ENCODE measurements at regions of chr18 and their contacts with region 1.

Region 1: DNA sequence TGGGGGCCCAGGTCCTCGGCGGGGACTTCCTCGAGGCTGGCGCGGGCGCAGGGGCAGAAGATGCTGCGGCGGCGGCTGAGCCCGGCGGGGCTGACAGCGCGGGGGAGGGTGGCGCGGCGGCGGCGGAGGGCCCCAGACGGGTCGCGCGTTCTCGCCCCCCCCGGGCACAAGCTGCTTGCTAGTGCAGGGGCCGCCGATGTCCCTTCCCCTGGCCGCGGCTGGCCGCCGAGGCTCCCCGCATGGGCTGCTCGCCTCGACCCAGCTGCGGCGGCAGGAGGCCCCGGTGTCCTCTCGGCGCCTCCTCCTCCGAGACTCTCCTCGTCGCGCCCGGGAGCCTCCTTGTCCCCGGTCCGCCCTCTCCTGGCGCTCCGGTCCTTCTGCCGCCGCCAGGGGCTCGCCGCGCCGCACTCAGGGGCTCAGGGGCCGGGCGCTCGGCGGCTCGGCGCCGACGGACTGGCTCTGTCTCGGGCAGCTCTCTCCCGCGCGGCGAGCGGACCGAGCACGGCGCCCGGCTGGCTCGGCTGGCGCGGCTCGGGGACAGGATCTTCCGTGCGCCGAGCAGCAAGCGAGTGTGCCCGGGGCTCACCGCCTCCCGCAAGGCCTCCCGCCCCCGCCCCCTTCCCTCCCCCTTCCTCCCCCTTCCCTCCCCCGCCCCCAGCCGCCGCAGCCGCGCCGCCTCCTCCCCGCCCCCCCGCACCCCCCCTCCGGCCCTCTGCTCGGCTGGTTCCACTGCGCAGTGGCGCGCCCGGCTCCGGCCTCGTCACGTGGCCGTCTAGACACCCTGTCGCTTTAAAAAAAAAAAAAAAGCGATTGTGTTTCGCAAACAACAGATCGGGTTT is 902 bp upstream of the SMAD7 start:
- DNase-seq: peak; percentile 92

Region 2: DNA sequence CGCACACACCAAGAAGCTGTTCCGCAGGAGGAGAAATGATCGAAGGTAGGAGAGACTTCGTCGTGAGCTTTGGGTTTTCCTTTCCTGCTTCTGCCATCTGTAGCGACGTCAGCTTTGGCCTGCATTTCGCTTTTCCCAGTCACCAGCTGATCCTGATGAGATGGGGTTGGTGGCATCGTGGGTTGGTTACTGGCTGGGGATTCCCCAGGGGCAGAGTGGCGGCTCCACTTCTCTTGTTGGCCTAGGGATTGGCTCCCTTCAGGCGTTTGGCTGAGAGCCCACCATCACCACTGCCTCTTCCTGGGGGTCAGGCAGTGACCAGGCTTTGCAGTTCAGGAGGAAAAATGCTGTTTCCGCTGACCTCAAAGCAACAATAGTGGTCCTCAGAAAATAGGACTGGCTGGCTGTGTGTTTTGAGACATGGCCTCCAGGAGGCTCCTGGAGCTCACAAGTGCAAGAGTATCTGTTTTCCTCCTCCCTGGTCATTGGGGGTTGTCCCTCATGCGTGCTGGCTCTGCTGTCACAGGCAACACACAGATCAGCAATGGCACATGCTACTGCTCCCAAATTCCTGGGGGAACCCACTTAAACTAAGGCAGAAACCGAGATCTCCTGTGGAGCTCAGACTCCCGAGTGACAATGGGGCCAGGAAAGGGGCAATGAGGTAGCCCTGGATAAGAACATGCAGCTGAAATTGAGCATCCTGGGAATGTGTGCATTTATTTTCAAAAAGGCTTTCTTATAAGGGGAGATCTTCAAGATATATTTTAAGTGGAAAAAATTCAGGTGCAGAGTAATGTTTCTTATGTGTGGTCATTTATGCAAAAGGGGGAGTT is 239.8 kb before region 1 on chr18:
- intact Hi-C with region 1: loop called (anchors 10 kb)
- DNase-seq: no peak

Region 3: DNA sequence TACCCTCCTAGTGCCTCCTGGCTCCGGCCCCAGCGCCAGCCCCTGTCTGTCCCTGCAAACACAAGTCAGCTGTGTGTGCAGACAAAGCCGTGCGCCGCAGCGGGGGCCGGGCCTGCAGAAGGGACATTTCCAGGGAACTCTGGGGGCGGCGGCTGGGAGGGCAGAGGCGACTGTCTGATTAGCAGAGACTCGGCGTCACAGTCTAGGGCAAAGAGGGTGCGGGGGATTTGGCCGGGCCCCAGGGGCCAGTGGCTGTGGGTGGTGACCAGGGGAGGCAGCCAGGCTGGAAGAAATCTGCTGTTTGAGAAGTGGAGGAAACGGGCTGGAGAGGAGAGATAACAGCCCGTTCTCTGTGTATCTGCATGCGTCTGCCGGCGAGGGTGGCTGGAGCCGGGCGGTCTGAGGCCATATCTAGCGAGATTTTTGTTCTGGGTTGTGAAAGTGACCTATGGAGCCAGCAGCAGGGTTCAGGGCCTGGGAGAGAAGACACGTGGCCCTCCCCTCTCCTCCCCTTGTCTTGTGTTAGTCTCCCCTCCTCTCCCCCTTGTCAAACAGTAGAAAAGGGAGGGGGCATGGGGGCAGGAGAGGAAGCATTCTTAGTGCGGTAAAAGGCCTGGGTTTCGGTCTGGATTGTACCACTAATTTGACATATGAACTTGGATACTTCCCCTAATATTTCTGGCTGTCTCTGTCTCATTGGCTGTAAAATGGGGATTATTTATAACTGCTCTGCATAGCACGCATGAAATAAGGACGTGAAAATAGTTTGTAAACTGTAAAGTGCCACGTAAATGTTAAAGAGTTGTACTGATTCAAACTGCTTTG is 170.3 kb before region 1 on chr18:
- intact Hi-C with region 1: loop called (anchors 1 kb)
- DNase-seq: peak; percentile 96

Region 4: DNA sequence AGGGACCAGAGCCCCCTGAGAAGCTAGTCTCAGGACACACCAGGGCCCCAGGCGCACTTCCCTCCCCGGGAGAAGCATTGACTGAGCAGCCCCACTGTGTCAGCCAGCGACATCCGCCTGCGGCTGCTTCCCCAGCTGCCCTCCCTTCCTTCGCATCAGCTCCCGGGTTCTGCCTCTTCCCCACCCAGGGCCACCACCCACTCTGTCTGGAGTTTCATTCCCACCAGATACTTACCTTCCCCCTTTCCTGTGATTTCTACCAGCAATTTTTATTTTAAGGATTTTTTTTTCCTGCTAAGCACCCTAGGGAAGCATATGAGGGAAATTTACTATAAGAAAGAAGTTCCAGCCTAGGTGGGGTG is 100.1 kb before region 1 on chr18:
- intact Hi-C with region 1: loop called (anchors 5 kb)
- DNase-seq: peak; percentile 86

Region 5: GRCh38 chr18:48975649-48976204 is 24.1 kb after region 1 on chr18:
- intact Hi-C with region 1: loop called (anchors 2 kb)
- DNase-seq: no peak

Region 6: DNA sequence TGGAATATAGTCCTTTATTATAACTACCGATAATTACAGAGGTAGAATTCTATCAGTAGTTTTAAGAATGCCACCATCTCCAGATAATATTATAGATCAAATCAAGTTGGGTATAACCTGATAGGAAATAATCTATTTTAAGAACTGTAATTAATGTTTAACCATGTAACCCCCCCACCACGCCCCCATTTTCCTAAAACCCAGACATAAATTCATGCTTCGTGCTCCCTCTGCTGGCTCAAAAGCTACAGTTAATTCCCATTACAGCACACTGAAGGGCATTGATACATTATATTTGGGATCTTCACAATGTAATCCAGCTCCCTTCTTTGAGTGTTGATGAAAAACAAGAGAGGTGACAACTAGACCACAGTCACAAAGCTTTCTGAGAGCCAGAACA is 227.1 kb after region 1 on chr18:
- intact Hi-C with region 1: loop called (anchors 10 kb)
- DNase-seq: no peak

Region 7: GRCh38 chr18:49813319-49814146 is 861.9 kb after region 1 on chr18 and contains the start of gene ACAA2:
- intact Hi-C with region 1: loop called (anchors 5 kb)
- DNase-seq: peak; percentile 96
- total RNA-seq, gene ACAA2: 130 TPM

Measured in cardiac septum (tissue), 1 donor.